ENCODE measurements at regions of chr15 and their contacts with region 1.

Region 1: GRCh38 chr15:89358755-89359439 is 24.3 kb upstream of the POLG start:
- DNase-seq: peak; percentile 91
- ATAC-seq: peak; percentile 90
- H3K4me3 Mint-ChIP-seq: peak overlapping the region; percentile 70
- H3K27ac Mint-ChIP-seq: no peak overlapping the region
- H3K4me1 Mint-ChIP-seq: no peaks in the 10 kb centered on the region
- H3K27me3 Mint-ChIP-seq: peaks cover 64% of the 10 kb centered on the region

Region 2: GRCh38 chr15:89334510-89335288 is 24.2 kb before region 1 on chr15 and contains the start of gene POLG:
- CTCF ChIA-PET with region 1: interaction called, 58 read pairs
- POLR2A ChIA-PET with region 1: no interaction called
- intact Hi-C with region 1: loop called in 1 of 2 experiments (anchors 1 kb)
- DNase-seq: peak; percentile 99
- ATAC-seq: peak; percentile 92
- H3K4me3 Mint-ChIP-seq: peak within 1 kb of the TSS; percentile 80
- H3K27ac Mint-ChIP-seq: peak within 1 kb of the TSS; percentile 87
- H3K4me1 Mint-ChIP-seq: peaks cover 56% of the 10 kb centered on the region
- H3K27me3 Mint-ChIP-seq: peaks cover 2% of the 10 kb centered on the region
- total RNA-seq, gene POLG: 63.2 to 80.4 TPM

Region 3: GRCh38 chr15:89378296-89379151 is 19.6 kb after region 1 on chr15:
- CTCF ChIA-PET with region 1: interaction called, 77 read pairs
- POLR2A ChIA-PET with region 1: no interaction called
- intact Hi-C with region 1: loop called in 1 of 2 experiments (anchors 2 kb)
- DNase-seq: peak; percentile 22
- ATAC-seq: no peak
- H3K4me3 Mint-ChIP-seq: peak overlapping the region; percentile 44
- H3K27ac Mint-ChIP-seq: no peak overlapping the region
- H3K4me1 Mint-ChIP-seq: peaks cover 7% of the 10 kb centered on the region
- H3K27me3 Mint-ChIP-seq: peaks cover 73% of the 10 kb centered on the region

Region 4: DNA sequence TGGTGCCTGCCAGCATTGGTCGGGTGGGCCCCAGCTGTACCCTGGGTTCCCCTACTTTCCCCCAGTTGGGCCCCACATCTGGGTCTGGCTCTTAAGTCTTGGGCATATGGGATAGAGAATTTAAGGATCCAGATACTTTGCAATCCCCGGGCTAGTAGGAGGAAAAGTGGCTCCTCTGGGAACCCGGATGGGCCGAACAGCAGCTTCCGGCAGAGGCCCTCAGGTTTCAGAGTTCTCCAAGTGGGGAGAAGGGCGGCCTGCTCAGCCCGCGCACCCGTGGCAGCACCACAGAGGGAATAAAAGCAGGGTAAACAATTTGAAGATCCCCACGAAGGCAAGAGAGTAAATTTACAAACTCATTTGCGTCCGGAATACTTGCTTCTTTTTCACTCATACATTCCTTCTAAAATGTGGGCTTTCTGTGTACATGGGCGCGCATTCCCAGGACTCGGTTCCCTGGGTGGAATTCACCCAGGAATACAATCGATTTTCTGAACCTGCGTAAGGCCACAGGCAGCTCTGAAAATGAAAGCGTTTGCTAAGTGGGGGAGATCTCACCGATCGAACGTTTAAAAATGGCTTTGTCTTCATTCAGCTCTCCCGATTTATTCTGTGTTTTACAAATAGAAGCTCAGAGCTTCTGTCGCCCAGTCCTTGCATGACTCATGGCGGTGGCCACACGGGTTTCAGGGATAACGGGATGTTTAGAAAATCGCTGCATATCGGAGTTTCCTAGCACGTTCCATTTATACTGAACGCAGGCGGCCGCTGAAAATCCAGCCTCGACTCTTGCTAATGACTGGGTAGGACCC is 49.7 kb after region 1 on chr15:
- CTCF ChIA-PET with region 1: interaction called, 108 read pairs
- POLR2A ChIA-PET with region 1: no interaction called
- intact Hi-C with region 1: no loop called
- DNase-seq: peak; percentile 30
- ATAC-seq: no peak
- H3K4me3 Mint-ChIP-seq: peak overlapping the region; percentile 56
- H3K27ac Mint-ChIP-seq: no peak overlapping the region
- H3K4me1 Mint-ChIP-seq: peaks cover 38% of the 10 kb centered on the region
- H3K27me3 Mint-ChIP-seq: peaks cover 84% of the 10 kb centered on the region

Region 5: DNA sequence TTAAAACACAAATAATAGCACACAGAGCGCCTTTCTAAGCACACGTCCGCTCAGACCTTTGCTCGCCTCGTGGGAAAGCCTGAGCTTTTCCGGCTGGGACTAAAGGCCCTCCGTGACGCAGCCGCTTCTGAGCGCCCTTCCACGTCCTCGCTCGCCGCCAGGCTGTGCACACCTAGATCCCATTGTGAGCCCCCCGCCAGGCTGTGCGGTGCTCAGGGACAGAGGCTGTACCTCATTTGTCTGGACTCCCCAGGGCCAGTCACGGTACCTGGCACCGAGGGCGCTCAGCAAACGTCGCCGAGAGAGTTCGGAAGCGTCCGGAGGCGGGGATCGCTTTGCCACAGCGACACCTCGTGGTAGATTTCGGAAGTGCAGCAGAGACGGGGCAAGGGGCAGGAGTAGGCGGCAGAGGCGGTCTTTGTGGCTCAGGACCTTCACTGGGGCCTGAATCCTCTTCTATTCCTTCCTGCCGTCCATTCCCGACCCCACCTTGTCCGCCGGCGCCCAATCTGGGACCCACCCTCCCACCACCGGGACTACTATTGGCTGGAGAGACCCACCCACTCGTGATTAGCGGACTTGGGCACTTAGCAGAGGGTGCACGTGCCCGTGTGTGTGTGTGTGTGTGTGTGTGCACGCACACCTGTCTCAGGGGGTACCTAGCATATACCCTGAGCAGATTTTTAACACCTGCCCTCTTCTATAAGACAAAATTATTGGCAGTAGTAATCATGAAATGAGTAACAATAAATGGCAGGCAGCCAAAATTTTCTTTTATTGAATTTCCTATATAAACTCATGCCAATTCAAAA is 71.8 kb after region 1 on chr15:
- CTCF ChIA-PET with region 1: interaction called, 89 read pairs
- POLR2A ChIA-PET with region 1: no interaction called
- intact Hi-C with region 1: loop called (anchors 1 kb)
- DNase-seq: peak; percentile 94
- ATAC-seq: peak; percentile 96
- H3K4me3 Mint-ChIP-seq: peak overlapping the region; percentile 71
- H3K27ac Mint-ChIP-seq: peak overlapping the region; percentile 55
- H3K4me1 Mint-ChIP-seq: peaks cover 7% of the 10 kb centered on the region
- H3K27me3 Mint-ChIP-seq: peaks cover 18% of the 10 kb centered on the region

Region 6: DNA sequence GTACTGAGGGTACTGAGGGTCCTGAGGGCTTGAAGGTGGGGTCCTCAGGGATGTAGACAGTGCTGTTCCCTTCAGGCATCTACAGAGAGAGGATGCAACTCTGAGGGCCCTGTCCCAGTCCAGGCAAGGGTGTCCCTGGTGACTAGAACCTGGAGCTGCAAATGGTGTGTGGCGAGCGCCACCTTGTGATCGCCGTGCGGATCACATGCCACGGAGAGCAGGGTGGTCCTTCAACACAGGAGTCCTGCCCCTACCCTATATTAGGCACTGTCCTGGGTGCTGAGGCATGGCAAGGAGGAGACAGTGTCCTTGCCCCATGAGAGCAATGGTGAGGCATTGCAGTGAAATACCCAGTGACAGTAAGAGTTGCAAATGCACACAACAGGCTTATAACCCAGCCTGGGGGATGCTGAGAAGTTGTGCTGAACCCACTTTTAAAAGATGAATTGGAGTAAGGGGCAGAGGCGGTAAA is 113.9 kb after region 1 on chr15:
- CTCF ChIA-PET with region 1: interaction called, 9 read pairs
- POLR2A ChIA-PET with region 1: no interaction called
- intact Hi-C with region 1: loop called (anchors 1 kb)
- DNase-seq: peak; percentile 75
- ATAC-seq: peak; percentile 83
- H3K4me3 Mint-ChIP-seq: no peak overlapping the region
- H3K27ac Mint-ChIP-seq: no peak overlapping the region
- H3K4me1 Mint-ChIP-seq: no peaks in the 10 kb centered on the region
- H3K27me3 Mint-ChIP-seq: peaks cover 17% of the 10 kb centered on the region

Region 7: GRCh38 chr15:89575146-89575655 is 216.3 kb after region 1 on chr15 and contains the start of gene TICRR:
- CTCF ChIA-PET with region 1: interaction called, 5 read pairs
- POLR2A ChIA-PET with region 1: no interaction called
- intact Hi-C with region 1: loop called in 1 of 2 experiments (anchors 2 kb)
- DNase-seq: peak; percentile 96
- ATAC-seq: peak; percentile 99
- H3K4me3 Mint-ChIP-seq: peak within 1 kb of the TSS; percentile 89
- H3K27ac Mint-ChIP-seq: peak within 1 kb of the TSS; percentile 72
- H3K4me1 Mint-ChIP-seq: peaks cover 26% of the 10 kb centered on the region
- H3K27me3 Mint-ChIP-seq: peaks cover 5% of the 10 kb centered on the region
- total RNA-seq, gene TICRR: 25.7 to 28.9 TPM

Region 8: DNA sequence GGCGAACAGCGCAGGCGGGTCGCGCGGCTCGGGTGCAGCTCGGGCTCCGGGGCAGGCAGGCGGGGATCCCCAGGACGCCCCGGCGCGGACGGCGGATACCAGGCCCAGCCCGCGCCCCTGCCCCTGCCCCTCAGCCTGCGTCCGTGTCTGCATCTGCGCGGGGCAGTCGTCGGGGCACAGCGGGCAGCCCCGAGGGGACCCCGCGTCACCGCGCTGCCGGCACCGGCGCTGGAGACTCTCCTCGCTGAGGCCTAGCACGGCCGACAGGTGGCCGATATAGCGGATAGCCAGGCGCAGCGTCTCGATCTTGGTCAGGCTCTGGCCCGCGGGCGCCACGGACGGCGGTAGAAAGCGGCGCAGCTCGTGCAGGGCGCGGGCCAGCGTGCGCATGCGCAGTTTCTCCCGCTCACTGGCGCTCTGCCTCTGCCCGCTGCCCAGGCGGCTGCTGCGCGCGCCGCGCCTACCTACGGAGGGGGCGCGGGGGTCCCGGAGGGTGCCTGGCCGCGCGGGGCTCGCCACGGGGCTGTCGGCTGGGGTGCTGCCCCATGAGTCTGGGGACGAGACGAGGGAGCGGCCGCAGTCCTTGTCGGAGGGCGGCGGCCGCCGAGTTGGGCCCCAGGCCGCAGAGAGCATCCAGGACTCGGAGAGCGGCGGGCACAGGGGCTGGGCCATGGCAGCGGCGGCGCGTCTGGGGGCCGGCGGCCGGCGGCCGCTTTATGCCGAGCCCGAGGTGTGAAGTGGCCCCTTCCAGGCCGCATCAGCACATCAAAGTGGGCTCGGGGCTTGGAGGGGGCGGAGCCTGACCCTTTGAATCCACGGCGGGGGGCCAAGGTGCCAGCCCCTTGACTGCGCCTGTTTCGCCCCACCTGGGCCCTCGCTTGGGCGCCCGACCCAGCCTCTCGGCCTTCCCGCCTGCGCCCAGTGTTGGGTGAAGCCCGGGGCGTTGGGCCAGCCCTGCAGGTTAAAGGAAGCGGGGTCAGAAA is 392.0 kb after region 1 on chr15 and contains the start of gene MESP1:
- CTCF ChIA-PET with region 1: no interaction called
- POLR2A ChIA-PET with region 1: no interaction called
- intact Hi-C with region 1: no loop called
- DNase-seq: peak; percentile 93
- ATAC-seq: peak; percentile 94
- H3K4me3 Mint-ChIP-seq: peak within 1 kb of the TSS; percentile 73
- H3K27ac Mint-ChIP-seq: no peak within 1 kb of the TSS
- H3K4me1 Mint-ChIP-seq: peaks cover 4% of the 10 kb centered on the region
- H3K27me3 Mint-ChIP-seq: peaks cover 11% of the 10 kb centered on the region
- total RNA-seq, gene MESP1: 2.9 to 4.6 TPM